ENCODE measurements at regions of chr6 and their contacts with region 1.

Region 1: GRCh38 chr6:83067448-83068413 is at the start of gene DOP1A:
- DNase-seq: peak; percentile 73 to 90
- ATAC-seq: peak; percentile 94 to 96
- H3K4me3 ChIP-seq: peak within 1 kb of the TSS; percentile 92
- H3K27ac ChIP-seq: peak within 1 kb of the TSS; percentile 72 to 88
- H3K4me1 ChIP-seq: peaks cover 11% of the 10 kb centered on the region; the same call in 1 of the 3 replicates
- CTCF ChIP-seq: peak; percentile 83
- EP300 ChIP-seq: no peak
- POLR2A ChIP-seq: peak; percentile 21; the same call in 1 of the 2 replicates
- RAD21 ChIP-seq: peak; percentile 79 to 83
- polyA plus RNA-seq, gene DOP1A: 5.9 and 7.0 TPM in 2 replicates

Region 2: GRCh38 chr6:82247634-82248232 is 820.0 kb before region 1 on chr6 and contains the start of gene IBTK:
- CTCF ChIA-PET with region 1: interaction called, 12 read pairs
- POLR2A ChIA-PET with region 1: interaction called, 13 read pairs
- DNase-seq: peak; percentile 85 to 96
- ATAC-seq: peak; percentile 90 to 92
- H3K4me3 ChIP-seq: peak within 1 kb of the TSS; percentile 93
- H3K27ac ChIP-seq: peak within 1 kb of the TSS; percentile 94 to 99
- H3K4me1 ChIP-seq: peaks cover 40% of the 10 kb centered on the region
- CTCF ChIP-seq: no peak
- EP300 ChIP-seq: no peak
- POLR2A ChIP-seq: peak; percentile 25; the same call in 1 of the 2 replicates
- RAD21 ChIP-seq: no peak
- polyA plus RNA-seq, gene IBTK: 64.0 and 87.3 TPM in 2 replicates

Region 3: GRCh38 chr6:83031689-83032088 is 36.0 kb before region 1 on chr6:
- CTCF ChIA-PET with region 1: no interaction called
- POLR2A ChIA-PET with region 1: no interaction called
- DNase-seq: no peak
- ATAC-seq: no peak
- H3K4me3 ChIP-seq: no peak overlapping the region
- H3K27ac ChIP-seq: no peak overlapping the region
- H3K4me1 ChIP-seq: no peaks in the 10 kb centered on the region
- CTCF ChIP-seq: no peak
- EP300 ChIP-seq: no peak
- POLR2A ChIP-seq: no peak
- RAD21 ChIP-seq: no peak

Region 4: DNA sequence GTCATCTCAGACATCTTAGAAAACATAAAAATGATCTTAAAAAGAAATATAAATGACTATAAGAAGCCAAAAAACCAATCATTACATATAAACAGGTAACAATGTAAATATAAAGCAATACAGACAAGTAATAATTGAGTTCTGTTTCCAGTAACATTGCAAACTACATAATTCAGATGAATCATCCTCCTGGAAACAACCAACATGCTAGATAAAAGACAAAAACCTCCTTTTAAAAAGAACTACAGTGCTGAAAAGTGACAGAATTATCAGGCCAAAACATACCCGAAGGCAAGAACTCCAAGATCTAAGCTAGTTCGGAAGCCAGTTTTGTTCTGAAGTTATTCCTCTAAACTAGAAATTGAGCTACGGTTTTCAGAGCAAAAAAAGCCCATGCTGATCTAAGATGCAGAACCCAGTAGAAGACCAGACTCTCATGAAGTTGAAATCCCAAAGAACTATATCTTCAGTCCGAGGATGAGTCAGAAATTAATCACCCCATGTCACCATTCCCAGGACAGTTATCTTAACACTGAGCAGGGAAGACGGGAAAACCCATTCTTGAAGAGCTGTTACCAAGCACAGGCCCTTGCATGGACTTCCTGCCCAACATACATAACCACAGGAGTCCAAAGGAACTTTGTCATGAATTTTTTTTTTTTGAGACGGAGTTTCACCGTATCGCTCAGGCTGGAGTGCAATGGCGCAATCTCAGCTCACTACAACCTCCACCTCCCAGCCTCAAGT is 115.5 kb after region 1 on chr6:
- CTCF ChIA-PET with region 1: interaction called, 27 read pairs
- POLR2A ChIA-PET with region 1: no interaction called
- DNase-seq: peak in 1 of 2 experiments; percentile 33
- ATAC-seq: peak; percentile 81 to 84
- H3K4me3 ChIP-seq: no peak overlapping the region
- H3K27ac ChIP-seq: peak overlapping the region in 1 of 2 experiments; percentile 57; a peak in 2 of 6 replicates
- H3K4me1 ChIP-seq: peaks cover 14% of the 10 kb centered on the region; the same call in 2 of the 3 replicates
- CTCF ChIP-seq: no peak
- EP300 ChIP-seq: no peak
- POLR2A ChIP-seq: no peak
- RAD21 ChIP-seq: no peak

Region 5: GRCh38 chr6:83215131-83216047 is 147.7 kb after region 1 on chr6:
- CTCF ChIA-PET with region 1: interaction called, 38 read pairs
- POLR2A ChIA-PET with region 1: no interaction called
- DNase-seq: peak; percentile 10 to 53
- ATAC-seq: peak; percentile 93 to 95
- H3K4me3 ChIP-seq: no peak overlapping the region
- H3K27ac ChIP-seq: no peak overlapping the region
- H3K4me1 ChIP-seq: no peaks in the 10 kb centered on the region
- CTCF ChIP-seq: peak; percentile 56
- EP300 ChIP-seq: no peak
- POLR2A ChIP-seq: no peak
- RAD21 ChIP-seq: peak; percentile 42 to 50; a peak in 4 of 5 replicates

Region 6: DNA sequence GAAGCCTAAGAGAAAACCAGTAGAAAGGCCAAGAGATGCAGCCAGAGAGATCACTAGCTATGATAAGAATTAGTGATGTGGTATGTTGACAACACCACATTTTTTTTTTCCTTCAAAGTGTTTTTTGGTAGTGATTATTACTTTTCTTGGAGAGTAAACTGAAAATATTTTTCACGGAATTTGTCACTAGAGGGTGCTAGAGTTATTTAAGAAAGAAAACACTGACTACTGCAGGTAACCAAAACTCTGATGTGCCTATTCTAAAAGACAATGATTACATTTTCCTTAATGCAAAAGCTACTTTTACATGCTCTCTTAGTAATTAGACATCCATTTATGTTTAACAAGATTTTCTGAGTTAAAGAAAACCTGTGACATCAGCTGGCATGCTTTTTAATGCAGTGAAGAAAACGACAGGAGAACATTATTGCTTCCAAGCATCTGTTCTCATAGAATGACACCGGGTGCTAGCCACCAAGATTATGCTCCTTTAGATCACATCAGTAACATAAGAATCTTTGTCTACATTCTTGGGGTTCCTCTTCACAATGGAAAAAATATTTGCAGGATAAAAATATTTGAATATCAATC is 154.3 kb after region 1 on chr6:
- CTCF ChIA-PET with region 1: interaction called, 38 read pairs
- POLR2A ChIA-PET with region 1: no interaction called
- DNase-seq: peak in 1 of 2 experiments; percentile 21
- ATAC-seq: peak; percentile 54; a peak in 3 of 6 replicates
- H3K4me3 ChIP-seq: no peak overlapping the region
- H3K27ac ChIP-seq: no peak overlapping the region
- H3K4me1 ChIP-seq: peaks cover 4% of the 10 kb centered on the region; the same call in 1 of the 3 replicates
- CTCF ChIP-seq: peak; percentile 59
- EP300 ChIP-seq: no peak
- POLR2A ChIP-seq: no peak
- RAD21 ChIP-seq: peak; percentile 50 to 52; a peak in 4 of 5 replicates

Region 7: DNA sequence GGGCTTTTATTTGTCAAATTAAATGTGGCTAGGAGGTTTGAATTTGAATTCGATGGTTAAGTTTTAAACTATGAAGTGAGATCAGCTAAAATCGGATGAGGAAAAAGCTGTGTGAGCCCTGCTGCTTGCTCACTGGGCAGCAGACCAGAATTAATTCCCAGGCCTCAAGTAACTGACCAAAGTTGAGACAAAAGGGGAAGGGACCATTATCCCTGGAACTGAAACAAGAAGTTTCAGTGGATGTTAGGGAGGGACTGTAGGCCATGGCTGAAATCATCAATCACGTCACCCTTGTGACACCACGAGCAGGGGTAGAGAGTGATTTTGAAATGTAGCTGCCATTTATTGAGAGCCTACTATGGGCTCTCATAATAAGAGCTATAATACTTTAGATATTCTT is 437.6 kb after region 1 on chr6:
- CTCF ChIA-PET with region 1: interaction called, 93 read pairs
- POLR2A ChIA-PET with region 1: no interaction called
- DNase-seq: no peak
- ATAC-seq: no peak
- H3K4me3 ChIP-seq: no peak overlapping the region
- H3K27ac ChIP-seq: no peak overlapping the region
- H3K4me1 ChIP-seq: peaks cover 8% of the 10 kb centered on the region; the same call in 1 of the 3 replicates
- CTCF ChIP-seq: no peak
- EP300 ChIP-seq: no peak
- POLR2A ChIP-seq: no peak
- RAD21 ChIP-seq: no peak